Heart right ventricle (tissue), 16 donors: ENCODE measurements at regions of chr4 and their contacts with region 1.

Region 1: DNA sequence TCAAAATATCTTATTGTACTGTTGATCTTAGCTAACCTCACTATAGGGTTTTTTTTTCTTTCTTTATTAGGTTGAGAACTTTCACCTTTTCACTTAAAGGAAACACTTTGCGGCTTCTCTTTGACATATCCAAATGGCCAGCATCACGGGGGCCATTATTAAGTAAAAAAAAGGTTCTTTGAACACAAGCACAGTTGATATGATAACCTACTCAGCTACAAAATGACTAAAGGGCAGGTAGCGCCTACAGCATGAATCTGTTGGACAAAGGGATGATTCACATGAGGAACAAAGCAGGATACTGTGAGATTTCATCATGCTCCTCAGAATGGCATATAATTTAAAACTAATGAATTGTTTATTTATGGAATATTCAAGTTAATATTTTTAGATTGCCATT is 119.6 kb downstream of the CCSER1 start:
- DNase-seq: no peak
- ATAC-seq: no peak
- H3K4me3 ChIP-seq: no peak overlapping the region
- H3K27ac ChIP-seq: peak overlapping the region in 2 of 10 donors; percentile 41 to 45
- H3K4me1 ChIP-seq: peaks cover 0 to 17% (median 0%) of the 10 kb centered on the region in 9 donors
- H3K27me3 ChIP-seq: no peaks in the 10 kb centered on the region
- CTCF ChIP-seq: no peak

Region 2: GRCh38 chr4:90174611-90175133 is 72.1 kb before region 1 on chr4:
- intact Hi-C with region 1: loop called in 1 of 10 experiments (anchors 10 kb)
- DNase-seq: no peak
- ATAC-seq: peak in 2 of 8 donors; percentile 52 to 63
- H3K4me3 ChIP-seq: no peak overlapping the region
- H3K27ac ChIP-seq: no peak overlapping the region
- H3K4me1 ChIP-seq: peaks cover 0 to 10% (median 0%) of the 10 kb centered on the region in 9 donors
- H3K27me3 ChIP-seq: no peaks in the 10 kb centered on the region
- CTCF ChIP-seq: no peak

Region 3: GRCh38 chr4:90753068-90753467 is 506.3 kb after region 1 on chr4:
- intact Hi-C with region 1: no loop called
- DNase-seq: no peak
- ATAC-seq: no peak
- H3K4me3 ChIP-seq: no peak overlapping the region
- H3K27ac ChIP-seq: no peak overlapping the region
- H3K4me1 ChIP-seq: no peaks in the 10 kb centered on the region
- H3K27me3 ChIP-seq: no peaks in the 10 kb centered on the region
- CTCF ChIP-seq: no peak